Common myeloid progenitor, CD34-positive (primary cell): ENCODE measurements at regions of chr5 and their contacts with region 1.

Region 1: DNA sequence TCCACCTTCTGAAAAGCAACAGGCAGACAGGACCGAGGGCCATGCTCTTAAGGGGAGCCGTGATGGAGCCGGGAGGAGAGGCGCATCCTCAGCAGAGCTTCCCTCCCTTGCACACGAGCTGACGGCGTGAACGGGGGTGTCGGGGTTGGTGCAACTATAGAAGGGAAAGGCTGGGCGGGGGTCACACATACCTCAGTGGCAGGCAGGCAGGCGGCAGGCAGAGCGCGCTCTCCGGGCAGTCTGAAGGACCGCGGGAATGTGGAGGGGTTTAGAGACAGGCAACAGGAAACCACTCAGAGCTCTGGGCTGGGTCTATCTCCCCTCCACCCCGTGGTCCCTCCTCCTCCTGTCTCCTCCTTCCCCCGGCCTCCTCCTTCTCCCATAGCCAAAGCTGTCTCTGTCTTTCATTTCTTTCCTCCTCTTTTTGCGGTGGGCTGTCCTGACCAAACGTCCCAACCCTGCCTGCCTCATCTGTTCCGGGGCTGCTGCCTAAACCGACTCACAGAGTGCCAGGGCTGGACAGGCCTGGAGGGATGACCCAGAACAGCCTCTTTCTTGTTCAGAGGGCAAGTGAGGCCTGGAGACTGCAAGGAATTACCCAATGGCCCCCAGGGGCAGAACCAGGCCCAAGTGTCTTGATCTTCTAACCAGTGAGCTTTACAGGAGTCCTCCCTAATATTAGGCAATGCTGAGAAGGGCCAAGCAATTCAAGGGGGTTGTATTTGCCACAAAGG is at the start of gene SPARC:
- DNase-seq: peak; percentile 21 to 47 (median 40)
- H3K4me3 ChIP-seq: peak within 1 kb of the TSS; percentile 25 to 78 (median 63)
- H3K27ac ChIP-seq: no peak within 1 kb of the TSS
- H3K4me1 ChIP-seq: peaks cover 0 to 51% (median 42%) of the 10 kb centered on the region in 4 experiments
- H3K27me3 ChIP-seq: no peaks in the 10 kb centered on the region

Region 2: DNA sequence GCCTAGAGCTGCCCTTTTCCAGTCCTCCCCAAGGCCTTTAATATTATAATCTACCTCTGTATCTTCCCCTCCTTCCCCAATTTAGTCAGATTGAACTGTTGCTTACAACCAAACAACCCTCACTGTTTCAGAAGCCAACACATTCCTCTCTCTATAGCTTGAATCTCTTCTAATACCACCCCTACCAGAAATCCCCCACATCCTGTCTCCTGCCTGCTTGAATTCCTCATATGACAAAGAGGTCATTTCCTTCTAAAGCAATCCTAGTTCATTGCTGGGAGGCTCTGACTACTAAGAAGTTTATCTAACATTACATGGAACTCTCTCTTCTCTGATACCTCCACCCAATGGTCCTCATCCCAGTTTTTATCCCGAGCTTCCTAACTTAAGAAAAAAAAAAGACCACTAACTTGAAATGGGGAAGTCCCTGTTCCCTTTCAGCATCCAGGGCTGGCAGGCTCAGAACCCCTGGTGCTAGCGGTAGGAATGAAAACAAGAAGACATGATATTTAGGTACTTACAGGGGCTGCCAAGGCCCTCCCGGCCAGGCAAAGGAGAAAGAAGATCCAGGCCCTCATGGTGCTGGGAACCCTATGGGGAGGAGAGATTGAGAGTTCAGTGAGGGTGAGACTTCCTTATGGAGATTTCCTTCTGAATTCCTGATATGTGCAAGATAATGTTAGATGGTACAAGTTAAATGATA is 11.1 kb before region 1 on chr5:
- CTCF ChIA-PET with region 1: interaction called, 16 read pairs
- POLR2A ChIA-PET with region 1: interaction called, 9 read pairs
- DNase-seq: peak in 2 of 3 donors; percentile 46 to 52
- H3K4me3 ChIP-seq: no peak overlapping the region
- H3K27ac ChIP-seq: no peak overlapping the region
- H3K4me1 ChIP-seq: peaks cover 12 to 41% (median 38%) of the 10 kb centered on the region in 4 experiments
- H3K27me3 ChIP-seq: no peaks in the 10 kb centered on the region

Region 3: DNA sequence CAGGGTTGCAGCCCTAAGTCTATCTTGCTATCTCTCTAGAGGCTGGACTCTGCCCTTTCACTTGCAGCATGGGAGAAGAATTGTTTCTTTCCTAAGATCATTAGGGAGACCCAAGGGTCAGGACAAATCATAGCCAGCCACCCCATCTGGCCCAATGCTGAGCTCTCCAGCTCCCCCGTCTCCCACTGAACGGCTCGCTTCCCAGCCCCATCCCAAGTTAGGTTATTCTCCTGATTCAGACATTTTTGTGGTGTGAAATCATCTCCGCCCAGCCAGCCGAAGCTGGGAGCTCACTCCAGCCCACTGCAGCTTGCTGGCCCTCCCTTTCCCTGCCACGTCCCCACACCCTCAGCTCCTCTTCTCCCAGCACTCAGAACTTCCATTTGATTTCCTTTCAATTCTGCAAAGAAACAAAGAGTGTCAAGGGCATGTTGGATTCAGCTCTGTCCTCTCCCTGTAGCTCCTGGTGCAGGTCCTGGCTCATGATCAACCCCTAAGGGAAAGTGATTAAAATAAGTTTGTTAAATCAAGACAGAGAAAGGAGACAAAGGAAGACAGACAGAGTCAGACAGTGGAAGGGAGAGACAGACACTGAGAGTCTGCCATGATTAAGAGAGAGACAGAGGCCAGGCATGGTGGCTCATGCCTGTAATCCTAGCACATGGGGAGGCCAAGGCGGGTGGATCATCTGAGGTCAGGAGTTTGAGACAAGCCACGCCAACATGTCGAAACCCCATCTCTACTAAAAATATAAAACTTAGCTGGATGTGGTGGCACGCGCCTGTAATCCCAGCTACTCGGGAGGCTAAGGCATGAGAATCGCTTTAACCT is 12.4 kb after region 1 on chr5:
- CTCF ChIA-PET with region 1: interaction called, 12 read pairs
- POLR2A ChIA-PET with region 1: no interaction called
- DNase-seq: no peak
- H3K4me3 ChIP-seq: no peak overlapping the region
- H3K27ac ChIP-seq: no peak overlapping the region
- H3K4me1 ChIP-seq: no peaks in the 10 kb centered on the region
- H3K27me3 ChIP-seq: no peaks in the 10 kb centered on the region